ENCODE measurements at regions of chr18 and their contacts with region 1.

Region 1: DNA sequence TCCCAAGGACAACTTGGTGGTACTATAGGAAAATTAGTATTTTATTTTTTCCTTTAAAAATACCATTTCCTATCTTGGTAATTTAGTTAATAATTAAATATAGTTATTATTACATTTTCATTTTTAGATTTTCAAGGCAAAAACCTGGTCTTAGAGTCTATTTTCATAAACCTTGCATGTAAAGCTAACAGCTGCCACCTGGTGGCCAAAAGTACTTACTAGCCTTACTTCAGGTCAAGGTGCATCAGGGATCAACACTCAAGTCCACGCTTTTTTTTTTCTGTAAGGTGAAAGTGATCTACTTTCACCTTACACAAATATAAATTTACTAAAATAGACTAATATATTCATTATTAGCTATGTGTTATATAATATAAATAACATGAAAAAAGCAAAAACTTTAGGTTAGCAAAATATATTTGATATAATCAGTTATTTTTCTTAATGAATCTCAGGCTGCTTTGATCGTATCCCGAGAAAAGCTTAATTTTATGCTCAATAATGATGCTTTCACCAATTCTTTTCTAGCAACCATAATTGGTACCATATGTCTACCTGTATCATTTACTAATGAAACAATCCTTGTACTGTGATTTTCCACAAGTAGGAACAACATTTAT is 62.5 kb downstream of the RELCH start:
- DNase-seq: peak; percentile 22 to 76 (median 58)
- ATAC-seq: peak; percentile 61 to 85 (median 79)
- H3K4me3 ChIP-seq: no peak overlapping the region
- H3K27ac ChIP-seq: no peak overlapping the region
- H3K4me1 ChIP-seq: no peaks in the 10 kb centered on the region
- H3K27me3 ChIP-seq: no peaks in the 10 kb centered on the region
- CTCF ChIP-seq: peak; percentile 48 to 66 (median 58)

Region 2: DNA sequence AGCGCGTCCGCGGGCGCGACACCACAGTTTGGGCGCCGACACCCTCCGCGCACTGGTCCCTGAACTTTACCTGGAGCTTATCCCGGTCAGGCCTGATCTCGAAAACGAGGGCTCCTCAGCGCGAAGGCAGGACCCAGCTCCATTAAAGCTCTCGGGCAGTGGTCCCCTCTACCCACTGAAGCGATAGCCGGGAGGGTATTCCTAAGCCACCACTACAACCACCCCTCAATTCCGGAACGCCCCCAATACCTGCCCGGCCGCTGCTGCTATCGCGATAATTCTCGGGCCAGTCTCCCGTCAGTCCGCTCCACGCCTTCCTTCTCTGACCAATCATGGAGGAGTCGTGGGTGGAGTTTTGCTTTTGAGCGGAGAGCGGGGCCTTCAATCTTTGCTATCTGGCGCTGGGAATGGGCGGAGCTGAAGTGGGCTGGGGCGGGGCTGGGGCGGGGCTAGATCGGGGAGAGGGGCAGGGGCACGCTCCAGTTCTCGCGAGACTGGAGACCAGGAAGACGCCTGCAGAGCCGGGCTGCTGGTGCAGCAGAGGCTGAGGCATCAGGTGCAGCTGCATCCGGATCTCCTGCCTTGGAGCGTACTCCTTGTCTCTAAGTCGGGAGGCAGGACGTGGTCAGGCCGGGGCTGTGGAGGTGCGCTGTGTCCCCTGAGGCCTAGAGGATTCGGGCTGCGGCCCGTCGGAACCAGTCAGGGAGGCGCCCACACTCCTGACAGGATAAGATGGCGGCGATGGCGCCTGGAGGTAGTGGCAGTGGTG is 62.6 kb before region 1 on chr18 and contains the starts of genes PIGN and RELCH:
- intact Hi-C with region 1: loop called in 2 of 3 experiments (anchors 5 kb)
- DNase-seq: peak; percentile 89 to 98 (median 96)
- ATAC-seq: peak; percentile 93 to 96 (median 94)
- H3K4me3 ChIP-seq: peak within 1 kb of the TSS; percentile 63 to 95 (median 94)
- H3K27ac ChIP-seq: peak within 1 kb of the TSS; percentile 67 to 81 (median 77)
- H3K4me1 ChIP-seq: peaks cover 8 to 35% (median 28%) of the 10 kb centered on the region in 3 donors
- H3K27me3 ChIP-seq: no peaks in the 10 kb centered on the region
- CTCF ChIP-seq: no peak
- total RNA-seq, gene PIGN: 14.3 to 23.1 (median 19.4) TPM
- total RNA-seq, gene RELCH: 9.4 to 18.2 (median 12.6) TPM